HepG2 (cell line): ENCODE measurements at regions of chr21 and their contacts with region 1.

Region 1: DNA sequence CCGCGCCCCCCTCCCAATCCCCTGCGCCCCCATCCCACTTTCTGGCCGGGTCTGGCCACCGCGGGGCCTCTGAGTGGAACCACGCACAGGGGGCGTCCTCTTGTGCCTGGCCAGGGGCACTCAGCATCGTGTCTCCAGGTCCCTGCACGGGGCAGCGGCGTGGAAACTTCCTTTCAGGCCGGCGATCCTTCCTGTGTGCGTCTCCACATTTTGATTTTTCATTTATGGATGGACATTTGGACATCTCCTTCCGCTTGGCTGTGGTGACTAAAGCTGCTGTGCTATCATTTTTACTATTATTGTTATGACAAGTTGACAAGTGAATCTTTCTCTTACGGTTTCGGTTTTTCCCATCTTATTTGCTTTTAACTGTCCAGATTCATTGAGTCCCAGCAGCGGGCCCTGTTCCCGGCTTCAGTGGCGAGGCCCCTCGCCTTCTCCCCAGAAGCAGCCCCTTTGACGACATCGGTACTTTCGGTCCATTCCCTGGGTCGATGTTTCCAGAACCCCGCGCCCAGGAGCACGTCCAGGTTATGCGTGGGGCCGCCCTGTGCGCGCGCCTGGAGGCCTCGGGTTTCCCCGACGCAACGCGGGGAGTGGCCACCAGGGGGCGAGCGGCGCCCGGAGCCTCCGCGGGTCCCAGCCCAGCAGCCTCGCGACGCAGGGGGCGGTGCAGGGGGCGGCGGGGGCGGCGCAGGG is 12.4 kb upstream of the SLC19A1 start:
- DNase-seq: peak; percentile 38
- ATAC-seq: peak; percentile 14
- H3K4me3 ChIP-seq: peak overlapping the region; percentile 61 to 71 (median 63)
- H3K27ac ChIP-seq: peak overlapping the region; percentile 8
- H3K4me1 ChIP-seq: peaks cover 33% of the 10 kb centered on the region
- H3K27me3 ChIP-seq: peaks cover 13 to 52% of the 10 kb centered on the region in 2 experiments
- CTCF ChIP-seq: peak; percentile 87
- EP300 ChIP-seq: no peak
- POLR2A ChIP-seq: no peak
- RAD21 ChIP-seq: peak; percentile 57

Region 2: GRCh38 chr21:45236481-45236880 is 318.1 kb before region 1 on chr21:
- CTCF ChIA-PET with region 1: no interaction called
- POLR2A ChIA-PET with region 1: no interaction called
- in situ Hi-C with region 1: no loop called
- intact Hi-C with region 1: no loop called
- DNase-seq: no peak
- ATAC-seq: peak; percentile 85
- H3K4me3 ChIP-seq: no peak overlapping the region
- H3K27ac ChIP-seq: no peak overlapping the region
- H3K4me1 ChIP-seq: no peaks in the 10 kb centered on the region
- H3K27me3 ChIP-seq: peaks cover 0 to 12% of the 10 kb centered on the region in 2 experiments; a peak in 2 of 5 replicates
- CTCF ChIP-seq: peak; percentile 35
- EP300 ChIP-seq: no peak
- POLR2A ChIP-seq: no peak
- RAD21 ChIP-seq: no peak

Region 3: GRCh38 chr21:45596704-45597318 is 42.2 kb after region 1 on chr21:
- CTCF ChIA-PET with region 1: interaction called, 36 read pairs
- POLR2A ChIA-PET with region 1: interaction called, 11 read pairs
- in situ Hi-C with region 1: loop called (anchors 5 kb)
- intact Hi-C with region 1: no loop called
- DNase-seq: peak; percentile 52
- ATAC-seq: peak; percentile 96
- H3K4me3 ChIP-seq: no peak overlapping the region
- H3K27ac ChIP-seq: no peak overlapping the region
- H3K4me1 ChIP-seq: no peaks in the 10 kb centered on the region
- H3K27me3 ChIP-seq: no peaks in the 10 kb centered on the region; a peak in 3 of 5 replicates
- CTCF ChIP-seq: peak; percentile 93
- EP300 ChIP-seq: no peak
- POLR2A ChIP-seq: no peak
- RAD21 ChIP-seq: peak; percentile 81